GM10248 (cell line): ENCODE measurements at regions of chr5 and their contacts with region 1.

Region 1: GRCh38 chr5:59139695-59140094 is 556.8 kb downstream of the RAB3C start:
- DNase-seq: no peak
- CTCF ChIP-seq: no peak

Region 2: DNA sequence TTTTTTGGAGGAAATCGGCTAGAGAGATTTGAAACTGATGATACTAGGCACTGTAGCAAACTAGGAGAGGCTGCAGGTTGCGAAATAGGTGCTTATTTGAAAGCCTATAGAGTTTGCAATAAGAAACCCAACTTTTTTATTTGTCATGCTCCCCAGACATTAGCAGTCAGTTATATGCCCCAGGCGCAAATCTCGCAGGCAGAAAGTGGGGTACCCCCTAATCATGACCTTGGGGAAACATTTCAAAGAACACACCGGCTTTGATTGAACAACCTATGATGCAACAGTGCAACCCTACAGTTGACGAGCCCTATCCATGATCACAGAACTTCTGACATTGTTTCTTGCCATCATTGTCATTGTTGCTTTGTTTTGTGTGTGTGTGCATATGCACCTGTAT is 46.4 kb before region 1 on chr5:
- CTCF ChIA-PET with region 1: no interaction called
- POLR2A ChIA-PET with region 1: no interaction called
- DNase-seq: no peak
- CTCF ChIP-seq: no peak

Region 3: GRCh38 chr5:59126708-59127573 is 12.8 kb before region 1 on chr5:
- CTCF ChIA-PET with region 1: interaction called, 27 read pairs
- POLR2A ChIA-PET with region 1: interaction called, 3 read pairs
- DNase-seq: no peak
- CTCF ChIP-seq: no peak